ENCODE measurements at regions of chr6 and their contacts with region 1.

Region 1: DNA sequence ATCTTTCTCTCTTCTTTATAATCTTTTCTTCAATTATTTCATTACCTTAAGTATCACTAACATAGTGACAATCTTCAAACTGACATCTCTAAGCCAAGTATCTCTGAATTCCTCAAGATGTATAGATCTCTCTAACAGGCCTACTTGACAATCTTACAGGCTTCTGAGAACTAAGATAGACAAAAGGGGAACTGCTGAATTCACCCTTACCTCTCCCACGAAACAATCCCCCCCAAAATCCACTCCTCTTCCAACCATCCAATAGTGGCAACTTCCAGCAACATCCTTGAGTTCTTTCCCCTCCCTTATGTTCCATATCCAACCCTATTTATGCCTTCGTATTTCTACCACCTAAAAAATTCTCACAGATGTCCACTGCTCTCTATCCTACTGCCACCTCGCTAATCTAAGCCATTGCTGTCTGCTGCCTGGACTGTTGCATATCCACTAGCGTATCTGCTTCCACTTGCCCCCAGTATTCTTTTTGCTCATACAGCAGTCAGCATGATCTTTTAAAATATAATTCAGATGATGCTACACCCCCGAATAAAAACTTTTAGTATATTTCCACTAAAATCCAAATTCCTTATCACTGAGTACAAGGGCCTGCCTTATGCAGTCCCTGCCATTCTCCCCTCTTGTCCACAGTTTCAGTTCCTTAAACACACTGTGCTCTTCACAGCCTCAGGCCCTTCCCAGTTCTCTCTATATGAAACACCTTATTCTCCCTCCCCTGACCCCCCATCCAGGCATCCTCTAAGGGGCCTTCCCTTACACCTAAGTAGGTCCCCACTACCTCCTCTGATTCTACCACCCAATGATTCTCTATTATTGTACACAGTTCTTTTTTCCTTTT is 8.0 kb downstream of the REPS1 start:
- DNase-seq: no peak
- ATAC-seq: no peak
- H3K4me3 Mint-ChIP-seq: no peak overlapping the region
- H3K27ac Mint-ChIP-seq: peak overlapping the region; percentile 26
- H3K4me1 Mint-ChIP-seq: peaks cover 56% of the 10 kb centered on the region
- H3K27me3 Mint-ChIP-seq: no peaks in the 10 kb centered on the region
- CTCF ChIP-seq: no peak

Region 2: GRCh38 chr6:138817822-138818308 is 162.2 kb before region 1 on chr6:
- CTCF ChIA-PET with region 1: no interaction called
- POLR2A ChIA-PET with region 1: interaction called, 12 read pairs
- DNase-seq: peak; percentile 62
- ATAC-seq: peak; percentile 89
- H3K4me3 Mint-ChIP-seq: 0 out of 2 replicates have a peak overlapping the region, but pooled peaks have one; percentile 2
- H3K27ac Mint-ChIP-seq: peak overlapping the region; percentile 92
- H3K4me1 Mint-ChIP-seq: peaks cover 32% of the 10 kb centered on the region
- H3K27me3 Mint-ChIP-seq: no peaks in the 10 kb centered on the region
- CTCF ChIP-seq: no peak